ENCODE measurements at regions of chr16 and their contacts with region 1.

Region 1: DNA sequence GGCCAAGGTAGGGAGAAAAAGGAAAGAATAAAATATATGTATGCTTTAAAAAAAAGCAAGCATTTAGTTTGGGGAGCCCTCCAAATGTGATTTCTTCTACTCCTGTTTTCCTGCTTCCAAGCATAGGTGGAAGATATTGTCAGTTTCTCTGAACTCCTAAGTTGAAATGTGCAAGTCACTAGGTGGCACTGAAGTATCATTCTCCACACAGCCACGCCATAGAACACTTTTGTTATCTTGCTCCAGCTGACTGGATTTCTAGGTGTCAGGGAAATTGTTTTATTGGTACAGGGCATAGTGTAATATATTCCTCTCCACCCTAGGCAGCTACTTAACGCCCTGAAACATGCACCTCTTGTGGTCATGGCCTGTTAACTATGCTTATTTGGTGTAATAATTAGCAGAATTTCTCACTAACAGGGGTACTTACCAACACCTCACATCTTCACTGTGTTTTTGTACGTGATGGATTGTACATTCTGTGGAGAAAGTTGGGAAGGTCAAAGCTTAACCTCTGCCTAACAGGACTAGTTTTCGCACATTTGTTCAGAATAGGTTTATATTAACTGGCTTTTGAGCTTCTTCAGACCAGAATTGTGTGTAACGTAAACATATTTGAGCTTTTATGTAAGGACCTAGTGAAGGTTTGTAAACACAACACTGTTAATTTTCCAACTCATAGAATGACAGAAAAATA is 69.3 kb downstream of the FTO start:
- DNase-seq: peak; percentile 59
- H3K4me3 Mint-ChIP-seq: no peak overlapping the region
- H3K27ac Mint-ChIP-seq: no peak overlapping the region
- H3K4me1 Mint-ChIP-seq: peaks cover 36% of the 10 kb centered on the region
- H3K27me3 Mint-ChIP-seq: no peaks in the 10 kb centered on the region
- CTCF ChIP-seq: peak; percentile 68

Region 2: GRCh38 chr16:53743149-53743566 is 30.1 kb before region 1 on chr16:
- CTCF ChIA-PET with region 1: interaction called, 13 read pairs
- intact Hi-C with region 1: no loop called
- DNase-seq: peak; percentile 54
- H3K4me3 Mint-ChIP-seq: no peak overlapping the region
- H3K27ac Mint-ChIP-seq: no peak overlapping the region
- H3K4me1 Mint-ChIP-seq: peaks cover 65% of the 10 kb centered on the region
- H3K27me3 Mint-ChIP-seq: no peaks in the 10 kb centered on the region
- CTCF ChIP-seq: peak; percentile 66

Region 3: GRCh38 chr16:53945996-53946395 is 172.7 kb after region 1 on chr16:
- CTCF ChIA-PET with region 1: no interaction called
- intact Hi-C with region 1: loop called (anchors 5 kb)
- DNase-seq: peak; percentile 36
- H3K4me3 Mint-ChIP-seq: no peak overlapping the region
- H3K27ac Mint-ChIP-seq: no peak overlapping the region
- H3K4me1 Mint-ChIP-seq: no peaks in the 10 kb centered on the region
- H3K27me3 Mint-ChIP-seq: no peaks in the 10 kb centered on the region
- CTCF ChIP-seq: peak; percentile 78

Region 4: GRCh38 chr16:54286090-54286993 is 513.0 kb after region 1 on chr16 and contains the start of gene IRX3:
- CTCF ChIA-PET with region 1: no interaction called
- intact Hi-C with region 1: loop called (anchors 2 kb)
- DNase-seq: peak; percentile 86
- H3K4me3 Mint-ChIP-seq: peak within 1 kb of the TSS; percentile 78
- H3K27ac Mint-ChIP-seq: peak within 1 kb of the TSS; percentile 1
- H3K4me1 Mint-ChIP-seq: peaks cover 8% of the 10 kb centered on the region
- H3K27me3 Mint-ChIP-seq: peaks cover 54% of the 10 kb centered on the region
- CTCF ChIP-seq: no peak
- total RNA-seq, gene IRX3: 5.7 TPM in 2 replicates